Tibial artery (tissue), 4 donors: ENCODE measurements at regions of chr11 and their contacts with region 1.

Region 1: DNA sequence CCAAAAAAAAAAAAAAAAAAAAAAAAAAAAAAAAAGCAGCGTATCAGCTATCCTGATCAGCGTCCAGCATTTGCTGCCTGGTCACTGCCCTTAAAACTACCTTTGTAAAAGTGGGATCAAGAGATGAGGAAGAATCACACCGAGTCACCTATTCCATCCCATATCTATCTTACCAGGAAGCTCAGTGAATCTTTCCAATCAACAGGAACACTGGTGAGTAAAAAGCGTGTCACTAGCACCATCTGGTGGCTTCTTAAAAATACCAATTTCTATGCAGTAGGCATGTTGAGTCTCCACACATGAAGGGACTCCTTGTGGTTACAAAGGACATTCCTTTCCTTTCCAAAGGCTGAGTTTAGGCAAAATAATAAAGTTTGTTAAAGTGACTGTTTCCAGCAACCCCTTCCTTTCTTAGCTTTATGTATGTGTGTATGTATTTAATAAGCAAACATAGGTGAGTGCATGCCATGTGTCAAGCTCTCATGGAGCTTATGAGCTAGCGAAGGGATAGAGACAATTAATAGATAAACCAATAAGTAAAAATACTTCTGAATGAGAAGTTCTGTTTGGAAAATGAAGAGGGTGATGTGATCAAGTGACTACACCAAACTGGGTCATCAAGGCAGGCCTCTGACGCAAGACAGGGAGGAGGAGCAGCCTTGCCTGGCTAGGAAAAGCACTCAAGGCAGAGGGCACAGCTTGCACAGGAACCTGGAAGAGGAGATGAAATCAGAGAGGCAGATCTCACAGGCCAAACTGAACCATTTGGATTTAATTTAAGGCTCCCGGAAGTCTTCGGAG is 13.9 kb upstream of the TP53AIP1 start:
- DNase-seq: no peak
- H3K4me3 ChIP-seq: no peak overlapping the region
- H3K27ac ChIP-seq: no peak overlapping the region
- H3K4me1 ChIP-seq: no peaks in the 10 kb centered on the region
- H3K27me3 ChIP-seq: peaks cover 0 to 4% of the 10 kb centered on the region in 2 donors
- CTCF ChIP-seq: peak; percentile 65 to 88

Region 2: DNA sequence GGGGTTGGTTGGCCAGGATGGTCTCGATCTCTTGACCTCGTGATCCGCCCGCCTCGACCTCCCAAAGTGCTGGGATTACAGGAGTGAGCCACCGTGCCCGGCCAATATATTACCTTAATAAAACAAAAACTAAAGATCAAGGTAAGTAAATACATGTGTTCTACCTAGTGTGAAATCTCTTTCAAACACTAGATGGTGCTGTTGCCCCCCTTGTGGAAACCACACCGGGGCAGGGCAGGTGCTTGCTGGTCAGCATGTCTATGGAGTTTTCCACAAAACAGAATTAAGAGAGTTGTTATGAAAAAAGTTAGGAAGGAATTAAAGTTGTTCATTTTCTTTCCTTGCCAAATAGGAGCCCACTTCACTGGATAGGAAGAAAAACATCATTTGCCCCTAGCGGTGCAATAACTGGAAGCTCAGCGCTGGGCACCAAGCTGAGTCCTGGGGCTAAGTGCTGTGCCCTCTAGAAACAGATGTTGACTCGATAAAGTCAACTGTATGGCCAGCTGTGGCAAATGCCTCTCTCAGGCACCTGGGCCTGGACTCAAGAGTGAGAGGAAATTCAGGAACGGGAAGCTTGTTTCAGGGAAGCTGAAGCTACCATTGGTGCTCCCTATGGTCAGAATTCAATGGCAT is 71.8 kb before region 1 on chr11:
- intact Hi-C with region 1: loop called (anchors 2 kb)
- DNase-seq: peak in 1 of 2 donors; percentile 43
- H3K4me3 ChIP-seq: no peak overlapping the region
- H3K27ac ChIP-seq: no peak overlapping the region
- H3K4me1 ChIP-seq: no peaks in the 10 kb centered on the region
- H3K27me3 ChIP-seq: peaks cover 0 to 16% of the 10 kb centered on the region in 2 donors
- CTCF ChIP-seq: peak; percentile 87 to 91

Region 3: DNA sequence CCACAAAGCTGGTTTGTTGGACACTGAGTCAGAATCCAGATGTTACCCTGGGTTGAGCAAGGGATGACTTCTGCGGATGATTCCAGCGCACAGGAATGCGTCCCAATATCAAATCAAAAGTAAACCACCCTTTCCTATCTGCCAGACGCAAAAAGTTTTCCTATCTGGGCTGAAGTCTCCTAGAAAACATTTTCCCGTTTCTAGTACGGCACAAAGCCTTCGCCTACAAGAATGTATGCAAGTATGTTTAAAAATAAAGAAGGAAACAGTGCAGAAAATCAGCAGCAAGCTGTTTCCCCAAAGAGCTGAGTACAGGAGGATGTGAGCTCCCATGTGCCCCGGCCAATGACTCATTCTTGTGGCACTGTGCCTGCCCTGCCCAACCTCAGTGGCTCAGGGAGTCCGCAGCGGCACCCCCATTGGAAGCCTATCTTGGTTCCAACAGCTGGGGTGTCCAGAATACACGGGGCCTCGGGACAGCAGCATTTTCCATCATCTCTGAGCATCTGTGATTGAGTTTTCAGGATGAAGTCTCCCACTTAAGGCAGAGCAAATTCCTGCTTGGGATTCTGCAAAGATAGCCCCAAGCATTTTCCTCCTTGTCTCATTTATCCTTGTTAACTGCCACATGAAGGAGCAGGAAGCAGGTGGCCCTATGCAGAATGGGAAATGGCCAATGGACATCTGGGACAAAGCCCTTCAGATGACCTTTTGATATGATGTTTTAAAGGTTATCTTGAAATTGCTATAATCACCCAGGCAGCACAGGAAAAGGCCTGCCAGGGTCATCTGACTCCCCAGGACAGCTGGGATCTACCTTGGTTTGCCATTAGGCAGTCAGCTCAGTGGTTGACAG is 48.0 kb before region 1 on chr11:
- intact Hi-C with region 1: no loop called
- DNase-seq: peak; percentile 77 to 83
- H3K4me3 ChIP-seq: no peak overlapping the region
- H3K27ac ChIP-seq: no peak overlapping the region
- H3K4me1 ChIP-seq: peaks cover 0 to 36% (median 26%) of the 10 kb centered on the region in 4 donors
- H3K27me3 ChIP-seq: no peaks in the 10 kb centered on the region
- CTCF ChIP-seq: no peak